IMR-90 (cell line): ENCODE measurements at regions of chr7 and their contacts with region 1.

Region 1: DNA sequence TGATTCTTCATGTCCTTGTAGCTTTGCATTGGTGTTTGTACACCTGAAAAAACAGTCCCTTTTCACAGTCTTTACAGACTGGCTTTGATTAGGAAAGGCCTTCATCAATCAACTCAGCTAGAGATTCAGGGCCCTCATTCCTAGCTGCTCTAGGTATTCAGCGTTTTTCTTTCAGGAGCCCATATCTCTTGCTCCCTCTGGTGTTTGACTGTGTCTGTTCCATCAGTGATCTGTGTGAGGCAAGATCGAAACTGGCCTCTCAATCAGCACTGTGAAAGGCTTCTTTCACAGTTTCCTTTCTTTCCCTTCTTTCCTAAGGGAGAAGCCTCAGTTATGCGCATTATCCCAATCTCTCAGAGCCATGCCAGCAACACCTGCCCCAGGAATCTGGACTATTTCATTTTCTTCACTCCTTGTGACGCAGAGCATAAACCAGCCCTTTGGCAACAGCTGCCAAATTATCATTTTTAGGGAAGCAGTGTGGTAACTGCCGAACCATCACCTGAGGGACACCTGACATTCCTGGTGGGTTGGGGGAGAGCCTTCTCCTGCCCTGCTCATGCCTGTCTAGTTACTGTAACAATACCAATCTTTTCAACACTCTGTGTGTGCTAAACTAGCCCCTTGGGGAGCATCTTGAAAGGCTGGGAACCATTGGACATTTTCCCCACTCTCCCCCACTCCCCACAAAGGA is 75.7 kb upstream of the CCDC71L start:
- DNase-seq: peak; percentile 83
- ATAC-seq: peak; percentile 95
- H3K4me3 ChIP-seq: no peak overlapping the region; the same call in 1 of the 2 replicates
- H3K27ac ChIP-seq: peak overlapping the region; percentile 77
- H3K4me1 ChIP-seq: peaks cover 5% of the 10 kb centered on the region
- H3K27me3 ChIP-seq: no peaks in the 10 kb centered on the region
- CTCF ChIP-seq: peak; percentile 82
- POLR2A ChIP-seq: no peak
- RAD21 ChIP-seq: peak; percentile 89

Region 2: DNA sequence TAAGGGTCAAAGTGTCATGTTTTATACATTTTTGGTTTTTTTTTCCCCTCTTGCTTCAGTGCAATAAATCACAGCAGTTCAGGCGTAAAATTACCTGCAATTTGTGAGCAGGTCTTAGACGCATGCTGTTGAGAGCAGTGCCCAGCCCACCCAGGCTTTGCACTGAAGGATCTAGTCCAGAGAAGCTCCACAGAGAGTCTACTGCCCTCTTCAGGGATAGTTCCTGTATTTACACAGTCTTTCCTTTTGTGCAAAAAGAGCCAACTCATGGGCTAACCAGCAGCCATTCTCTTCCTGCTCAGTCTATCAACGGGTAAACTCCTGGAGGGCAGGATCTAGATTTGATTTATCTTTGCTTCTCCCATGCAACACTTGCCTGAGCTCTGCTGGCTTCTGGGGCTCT is 369.6 kb before region 1 on chr7:
- CTCF ChIA-PET with region 1: no interaction called
- POLR2A ChIA-PET with region 1: no interaction called
- dilution Hi-C with region 1: no loop called
- in situ Hi-C with region 1: no loop called
- intact Hi-C with region 1: loop called (anchors 5 kb)
- DNase-seq: peak; percentile 22
- ATAC-seq: peak; percentile 73
- H3K4me3 ChIP-seq: no peak overlapping the region
- H3K27ac ChIP-seq: no peak overlapping the region
- H3K4me1 ChIP-seq: no peaks in the 10 kb centered on the region
- H3K27me3 ChIP-seq: no peaks in the 10 kb centered on the region; the same call in 1 of the 2 replicates
- CTCF ChIP-seq: peak; percentile 58
- POLR2A ChIP-seq: no peak
- RAD21 ChIP-seq: peak; percentile 56

Region 3: DNA sequence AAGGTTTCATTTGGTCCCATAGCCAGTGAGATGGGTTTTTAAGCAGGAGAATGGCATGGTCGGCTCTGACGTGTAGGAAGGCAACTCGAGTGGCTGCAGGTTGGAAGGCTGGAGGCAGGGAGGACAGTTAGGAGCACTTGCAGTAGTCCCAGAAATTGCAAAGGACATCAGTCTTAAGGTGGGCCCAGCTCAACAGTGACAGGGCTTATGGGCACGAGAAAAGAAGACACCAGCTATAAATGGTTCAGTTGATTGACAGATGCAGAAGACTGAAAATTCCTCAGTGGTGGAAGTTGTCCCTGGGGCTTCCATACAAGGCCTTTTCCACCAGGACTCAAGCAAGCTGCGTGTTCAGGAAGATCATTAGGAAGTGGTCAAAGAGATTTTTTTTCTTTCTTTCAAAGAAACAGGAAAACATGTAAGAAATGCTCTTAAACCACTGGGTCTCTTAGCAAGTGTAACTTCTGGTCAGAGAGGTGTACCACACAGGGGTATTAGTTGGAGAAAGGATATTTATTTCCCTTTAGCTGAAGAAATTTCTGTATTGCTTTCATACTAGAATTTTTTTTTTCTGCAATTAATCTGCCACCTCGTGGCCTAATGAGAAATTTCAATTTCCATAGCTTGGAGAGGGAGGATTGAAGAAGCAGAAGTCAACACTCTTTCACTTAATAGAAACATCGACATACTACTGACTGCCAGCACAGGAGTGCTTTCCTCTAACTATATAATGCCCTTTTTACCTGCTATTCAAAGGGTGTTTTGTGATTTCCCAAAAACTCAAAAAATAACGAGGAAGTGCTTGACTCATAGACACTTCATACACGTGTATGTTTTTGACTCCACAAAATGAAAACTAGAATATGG is 274.4 kb before region 1 on chr7:
- CTCF ChIA-PET with region 1: interaction called, 4 read pairs
- POLR2A ChIA-PET with region 1: no interaction called
- dilution Hi-C with region 1: no loop called
- in situ Hi-C with region 1: no loop called
- intact Hi-C with region 1: loop called (anchors 2 kb)
- DNase-seq: peak; percentile 52
- ATAC-seq: peak; percentile 64
- H3K4me3 ChIP-seq: no peak overlapping the region
- H3K27ac ChIP-seq: no peak overlapping the region
- H3K4me1 ChIP-seq: no peaks in the 10 kb centered on the region
- H3K27me3 ChIP-seq: no peaks in the 10 kb centered on the region
- CTCF ChIP-seq: peak; percentile 60
- POLR2A ChIP-seq: no peak
- RAD21 ChIP-seq: peak; percentile 61